AG04450 (cell line): ENCODE measurements at regions of chr4 and their contacts with region 1.

Region 1: GRCh38 chr4:76654791-76655190 is 219.8 kb downstream of the SHROOM3 start:
- DNase-seq: no peak
- H3K4me3 ChIP-seq: no peak overlapping the region
- H3K27ac ChIP-seq: no peak overlapping the region
- H3K27me3 ChIP-seq: no peaks in the 10 kb centered on the region
- CTCF ChIP-seq: no peak

Region 2: GRCh38 chr4:76535603-76536367 is 119.0 kb before region 1 on chr4:
- CTCF ChIA-PET with region 1: interaction called, 10 read pairs
- POLR2A ChIA-PET with region 1: no interaction called
- DNase-seq: no peak
- H3K4me3 ChIP-seq: no peak overlapping the region
- H3K27ac ChIP-seq: no peak overlapping the region
- H3K27me3 ChIP-seq: no peaks in the 10 kb centered on the region
- CTCF ChIP-seq: no peak

Region 3: DNA sequence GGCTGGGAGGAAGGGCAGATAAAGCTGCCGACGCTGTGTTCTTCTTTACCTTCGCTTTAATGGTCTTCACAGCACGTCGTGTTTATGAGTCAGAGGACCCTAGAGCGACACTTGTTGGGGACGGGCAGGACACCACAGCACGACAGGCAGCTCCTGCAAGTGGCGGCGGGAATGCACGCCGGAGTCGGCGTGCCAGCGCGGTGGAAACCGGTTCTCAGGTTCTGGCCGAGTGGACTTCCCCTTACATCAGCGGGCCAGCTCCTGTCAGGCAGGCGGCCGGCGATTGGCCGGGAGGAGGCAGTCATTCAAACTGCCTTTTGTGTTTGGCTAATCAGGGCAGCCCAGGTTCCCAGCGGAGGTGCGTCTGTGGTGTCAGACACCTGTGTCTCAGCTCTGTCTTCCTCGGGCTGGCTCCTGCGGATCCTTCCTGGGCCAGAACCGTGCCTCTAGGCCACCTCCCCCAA is 68.9 kb before region 1 on chr4:
- CTCF ChIA-PET with region 1: no interaction called
- POLR2A ChIA-PET with region 1: no interaction called
- DNase-seq: no peak
- H3K4me3 ChIP-seq: peak overlapping the region; percentile 29
- H3K27ac ChIP-seq: no peak overlapping the region
- H3K27me3 ChIP-seq: no peaks in the 10 kb centered on the region
- CTCF ChIP-seq: no peak

Region 4: DNA sequence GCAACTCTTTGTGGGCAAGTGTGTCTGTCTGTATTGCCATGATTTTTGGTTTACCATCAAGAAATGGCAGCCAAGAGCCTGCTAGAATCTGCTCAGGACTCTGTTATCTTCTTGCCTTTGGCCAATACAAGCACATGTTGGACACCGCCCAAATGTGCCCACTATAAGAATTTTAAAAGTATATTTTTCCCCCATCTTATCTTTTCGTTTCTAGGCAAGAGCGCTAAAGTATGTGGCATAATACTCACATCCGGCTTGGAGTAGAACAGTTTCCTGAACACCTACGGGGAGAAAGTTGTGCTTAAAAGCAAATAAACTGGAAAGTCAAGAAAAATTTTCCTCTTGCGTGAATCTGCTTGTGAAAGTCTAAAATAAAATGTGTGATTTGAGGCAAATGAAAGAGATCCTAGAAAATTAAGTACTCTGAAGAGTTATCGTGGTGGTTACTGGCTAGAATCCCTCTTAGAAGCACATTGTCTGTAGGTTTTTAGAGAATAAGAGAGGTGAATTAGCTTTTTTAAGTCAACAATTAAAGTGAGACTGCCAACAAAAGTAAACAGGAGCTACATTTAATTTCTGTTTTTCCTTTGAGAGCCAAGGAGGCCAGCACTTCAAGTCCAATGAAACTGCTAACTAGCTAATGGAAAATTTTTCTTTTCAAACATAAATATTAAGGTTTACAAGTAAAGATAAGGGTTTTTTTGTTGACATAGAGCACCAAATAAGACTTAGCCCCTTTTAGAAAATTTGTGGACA is 23.0 kb after region 1 on chr4:
- CTCF ChIA-PET with region 1: no interaction called
- POLR2A ChIA-PET with region 1: no interaction called
- DNase-seq: no peak
- H3K4me3 ChIP-seq: no peak overlapping the region
- H3K27ac ChIP-seq: no peak overlapping the region
- H3K27me3 ChIP-seq: no peaks in the 10 kb centered on the region
- CTCF ChIP-seq: no peak